Naive thymus-derived CD4-positive, alpha-beta T cell (primary cell): ENCODE measurements at regions of chr11 and their contacts with region 1.

Region 1: GRCh38 chr11:104799251-104799650 is 99.0 kb downstream of the CASP12 start:
- DNase-seq: peak in 2 of 9 donors; percentile 4 to 9
- ATAC-seq: peak; percentile 31
- H3K4me3 ChIP-seq: peak overlapping the region; percentile 33
- H3K4me3 Mint-ChIP-seq: peak overlapping the region; percentile 63 to 90 (median 85)
- H3K27ac ChIP-seq: no peak overlapping the region
- H3K27ac Mint-ChIP-seq: peak overlapping the region; percentile 69 to 95 (median 85)
- H3K4me1 ChIP-seq: peaks cover 0 to 10% of the 10 kb centered on the region in 2 donors
- H3K4me1 Mint-ChIP-seq: peaks cover 10 to 53% (median 40%) of the 10 kb centered on the region in 7 donors
- H3K27me3 ChIP-seq: no peaks in the 10 kb centered on the region
- H3K27me3 Mint-ChIP-seq: no peaks in the 10 kb centered on the region

Region 2: GRCh38 chr11:104772806-104773241 is 26.4 kb before region 1 on chr11:
- CTCF ChIA-PET with region 1: no interaction called
- POLR2A ChIA-PET with region 1: no interaction called
- intact Hi-C with region 1: loop called in 1 of 2 experiments (anchors 2 kb)
- DNase-seq: peak in 6 of 9 donors; percentile 24 to 49 (median 32)
- ATAC-seq: peak; percentile 69
- H3K4me3 ChIP-seq: no peak overlapping the region
- H3K4me3 Mint-ChIP-seq: peak overlapping the region in 6 of 10 donors; percentile 15 to 59 (median 34)
- H3K27ac ChIP-seq: no peak overlapping the region
- H3K27ac Mint-ChIP-seq: peak overlapping the region in 6 of 9 donors; percentile 9 to 53 (median 16)
- H3K4me1 ChIP-seq: peaks cover 0 to 13% of the 10 kb centered on the region in 2 donors
- H3K4me1 Mint-ChIP-seq: peaks cover 3 to 24% (median 20%) of the 10 kb centered on the region in 7 donors
- H3K27me3 ChIP-seq: no peaks in the 10 kb centered on the region
- H3K27me3 Mint-ChIP-seq: peaks cover 0 to 3% (median 0%) of the 10 kb centered on the region in 5 donors

Region 3: DNA sequence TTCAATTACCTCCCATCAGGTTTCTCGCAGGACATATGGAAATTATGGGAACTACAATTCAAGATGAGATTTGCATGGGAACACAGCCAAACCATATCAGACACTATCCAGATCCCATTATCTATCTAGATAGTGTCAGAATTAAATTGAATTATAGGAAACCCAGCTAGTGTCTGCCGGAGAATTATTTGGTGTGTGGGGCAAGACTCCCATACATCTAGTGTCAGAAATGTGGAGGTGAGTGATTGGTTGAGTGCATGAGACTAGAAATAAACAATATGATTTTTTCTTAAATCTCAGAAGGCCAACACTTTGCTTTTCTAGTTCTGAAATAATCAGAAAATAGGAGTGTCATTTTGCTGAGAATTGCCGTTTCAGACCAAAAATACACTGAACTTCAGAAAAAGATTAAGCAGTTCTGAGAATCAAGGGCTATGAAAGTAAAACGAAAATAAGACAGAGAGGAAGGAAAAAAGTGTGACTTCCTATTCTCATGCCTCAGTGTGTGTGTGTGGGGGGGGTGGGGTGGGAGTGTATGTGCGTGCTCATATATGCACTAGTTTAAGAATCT is 77.7 kb after region 1 on chr11:
- CTCF ChIA-PET with region 1: no interaction called
- POLR2A ChIA-PET with region 1: no interaction called
- intact Hi-C with region 1: loop called (anchors 2 to 5 kb)
- DNase-seq: peak in 6 of 9 donors; percentile 6 to 31 (median 21)
- ATAC-seq: peak; percentile 85
- H3K4me3 ChIP-seq: peak overlapping the region; percentile 40
- H3K4me3 Mint-ChIP-seq: peak overlapping the region; percentile 45 to 82 (median 75)
- H3K27ac ChIP-seq: peak overlapping the region; percentile 64
- H3K27ac Mint-ChIP-seq: peak overlapping the region; percentile 62 to 97 (median 85)
- H3K4me1 ChIP-seq: peaks cover 20 to 29% of the 10 kb centered on the region in 2 donors
- H3K4me1 Mint-ChIP-seq: peaks cover 25 to 52% (median 43%) of the 10 kb centered on the region in 7 donors
- H3K27me3 ChIP-seq: no peaks in the 10 kb centered on the region
- H3K27me3 Mint-ChIP-seq: no peaks in the 10 kb centered on the region

Region 4: GRCh38 chr11:104968355-104968855 is 169.2 kb after region 1 on chr11 and contains the start of gene CASP4:
- CTCF ChIA-PET with region 1: no interaction called
- POLR2A ChIA-PET with region 1: no interaction called
- intact Hi-C with region 1: loop called in 1 of 2 experiments (anchors 2 kb)
- DNase-seq: peak in 7 of 9 donors; percentile 18 to 57 (median 48)
- ATAC-seq: peak; percentile 82
- H3K4me3 ChIP-seq: peak within 1 kb of the TSS; percentile 67
- H3K4me3 Mint-ChIP-seq: peak within 1 kb of the TSS; percentile 90 to 99 (median 96)
- H3K27ac ChIP-seq: peak within 1 kb of the TSS; percentile 89
- H3K27ac Mint-ChIP-seq: peak within 1 kb of the TSS; percentile 94 to 100 (median 97)
- H3K4me1 ChIP-seq: peaks cover 16 to 36% of the 10 kb centered on the region in 2 donors
- H3K4me1 Mint-ChIP-seq: peaks cover 35 to 47% (median 43%) of the 10 kb centered on the region in 7 donors
- H3K27me3 ChIP-seq: no peaks in the 10 kb centered on the region
- H3K27me3 Mint-ChIP-seq: no peaks in the 10 kb centered on the region
- total RNA-seq, gene CASP4: 60.7 to 94.7 (median 76.9) TPM

Region 5: DNA sequence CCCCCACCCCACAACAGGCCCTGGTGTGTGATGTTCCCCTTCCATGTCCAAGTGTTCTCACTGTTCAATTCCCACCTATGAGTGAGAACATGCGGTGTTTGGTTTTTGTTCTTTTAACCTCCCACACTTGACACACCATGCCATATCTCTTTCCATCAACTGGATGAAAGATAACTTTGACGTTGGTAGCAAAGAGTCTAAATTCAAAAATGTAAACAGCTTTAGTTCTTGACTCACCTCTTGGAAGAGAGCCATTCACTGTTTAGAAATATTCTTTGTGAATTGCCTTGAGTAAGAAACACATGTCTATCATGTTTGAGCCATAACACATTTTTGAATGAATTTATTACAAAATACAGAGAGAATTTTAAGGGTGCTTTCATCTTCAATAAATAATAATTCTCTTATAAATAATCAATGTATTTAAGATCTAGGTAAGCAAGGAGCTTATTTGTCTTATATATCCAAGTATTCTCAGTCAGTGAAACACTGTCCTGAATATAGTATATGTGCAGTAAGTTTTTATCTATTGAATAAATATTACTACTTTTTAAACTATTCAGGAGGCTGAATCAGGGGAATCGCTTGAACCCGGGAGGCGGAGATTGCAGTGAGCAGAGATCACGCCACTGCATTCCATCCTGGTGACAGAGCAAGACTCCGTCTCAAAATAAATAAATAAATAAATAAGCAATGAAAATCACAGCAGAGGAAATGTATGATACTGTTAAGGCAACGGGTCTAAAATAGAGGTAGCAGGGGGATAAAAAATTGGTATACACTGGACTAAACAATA is 333.7 kb after region 1 on chr11:
- CTCF ChIA-PET with region 1: no interaction called
- POLR2A ChIA-PET with region 1: no interaction called
- intact Hi-C with region 1: no loop called
- DNase-seq: no peak
- ATAC-seq: no peak
- H3K4me3 ChIP-seq: no peak overlapping the region
- H3K4me3 Mint-ChIP-seq: no peak overlapping the region
- H3K27ac ChIP-seq: no peak overlapping the region
- H3K27ac Mint-ChIP-seq: no peak overlapping the region
- H3K4me1 ChIP-seq: no peaks in the 10 kb centered on the region
- H3K4me1 Mint-ChIP-seq: no peaks in the 10 kb centered on the region
- H3K27me3 ChIP-seq: no peaks in the 10 kb centered on the region
- H3K27me3 Mint-ChIP-seq: peaks cover 0 to 10% (median 4%) of the 10 kb centered on the region in 5 donors